GM10248 (cell line): ENCODE measurements at regions of chr4 and their contacts with region 1.

Region 1: GRCh38 chr4:173257732-173258717 is 76.1 kb downstream of the HMGB2 start:
- DNase-seq: peak; percentile 44
- CTCF ChIP-seq: peak; percentile 83

Region 2: GRCh38 chr4:173192375-173193162 is 65.5 kb before region 1 on chr4:
- CTCF ChIA-PET with region 1: interaction called, 10 read pairs
- POLR2A ChIA-PET with region 1: no interaction called
- DNase-seq: no peak
- CTCF ChIP-seq: peak; percentile 16

Region 3: DNA sequence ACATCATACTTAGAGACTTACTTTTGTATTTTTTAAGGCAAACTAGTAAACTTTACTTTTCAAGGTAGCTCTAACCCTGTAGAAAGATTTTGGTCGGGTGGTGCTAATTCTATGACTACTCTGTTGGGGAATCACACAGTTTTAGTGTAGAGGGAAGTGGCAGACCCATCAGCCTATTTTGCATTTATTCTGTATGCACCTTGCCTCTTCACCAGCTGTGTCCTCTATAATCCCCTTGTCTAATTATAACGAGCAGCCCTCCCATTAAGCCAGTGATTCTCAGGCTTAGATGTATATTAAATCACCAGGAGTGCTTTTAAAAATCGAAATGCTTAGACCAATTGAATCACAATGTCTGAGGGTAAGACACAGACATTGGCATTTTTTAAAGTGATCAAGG is 11.3 kb before region 1 on chr4:
- CTCF ChIA-PET with region 1: interaction called, 33 read pairs
- POLR2A ChIA-PET with region 1: no interaction called
- DNase-seq: no peak
- CTCF ChIP-seq: no peak

Region 4: GRCh38 chr4:173280998-173281397 is 23.0 kb after region 1 on chr4:
- CTCF ChIA-PET with region 1: interaction called, 16 read pairs
- POLR2A ChIA-PET with region 1: no interaction called
- DNase-seq: no peak
- CTCF ChIP-seq: no peak